Activated CD4-positive, alpha-beta T cell treated with anti-CD3 and anti-CD28 coated beads for 36 hours (primary cell): ENCODE measurements at regions of chr10 and their contacts with region 1.

Region 1: DNA sequence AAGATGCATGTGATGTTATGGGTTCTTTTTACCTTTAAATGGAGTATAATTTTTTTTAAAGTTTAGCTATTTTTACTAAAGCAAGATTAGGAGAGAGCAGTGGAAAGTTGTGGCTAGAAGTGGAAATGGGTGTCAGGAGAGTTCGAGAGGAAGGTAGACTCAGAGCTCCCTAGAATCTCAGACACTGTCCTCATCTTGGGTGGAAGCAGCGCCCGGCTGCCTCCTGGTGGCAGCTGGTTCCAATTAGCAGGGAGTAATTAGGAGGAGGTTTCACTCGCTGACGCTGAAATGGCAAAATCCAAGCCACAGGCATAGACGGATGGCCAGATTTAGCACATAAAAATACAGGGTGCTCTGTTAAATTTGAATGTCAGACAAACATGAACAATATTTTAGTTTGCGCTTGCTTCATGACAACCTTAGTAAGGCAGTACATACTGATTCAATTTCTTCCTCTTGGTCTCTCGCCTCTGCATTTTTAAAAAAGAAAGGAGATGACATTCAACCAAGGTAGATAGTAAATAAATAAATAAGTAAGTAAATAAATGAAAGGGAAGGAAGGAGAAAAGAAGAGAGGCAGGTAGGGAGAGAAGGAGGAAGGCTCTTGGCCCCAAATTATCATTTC is 58.5 kb downstream of the LGI1 start:
- DNase-seq: peak; percentile 66
- ATAC-seq: peak; percentile 72
- H3K4me3 Mint-ChIP-seq: no peak overlapping the region
- H3K27ac Mint-ChIP-seq: no peak overlapping the region
- H3K4me1 Mint-ChIP-seq: no peaks in the 10 kb centered on the region
- H3K27me3 Mint-ChIP-seq: peaks cover 34% of the 10 kb centered on the region

Region 2: GRCh38 chr10:92011560-92012214 is 1804.5 kb before region 1 on chr10:
- CTCF ChIA-PET with region 1: no interaction called
- POLR2A ChIA-PET with region 1: no interaction called
- intact Hi-C with region 1: no loop called
- DNase-seq: no peak
- ATAC-seq: peak; percentile 100
- H3K4me3 Mint-ChIP-seq: no peak overlapping the region
- H3K27ac Mint-ChIP-seq: no peak overlapping the region
- H3K4me1 Mint-ChIP-seq: peaks cover 4% of the 10 kb centered on the region
- H3K27me3 Mint-ChIP-seq: no peaks in the 10 kb centered on the region

Region 3: DNA sequence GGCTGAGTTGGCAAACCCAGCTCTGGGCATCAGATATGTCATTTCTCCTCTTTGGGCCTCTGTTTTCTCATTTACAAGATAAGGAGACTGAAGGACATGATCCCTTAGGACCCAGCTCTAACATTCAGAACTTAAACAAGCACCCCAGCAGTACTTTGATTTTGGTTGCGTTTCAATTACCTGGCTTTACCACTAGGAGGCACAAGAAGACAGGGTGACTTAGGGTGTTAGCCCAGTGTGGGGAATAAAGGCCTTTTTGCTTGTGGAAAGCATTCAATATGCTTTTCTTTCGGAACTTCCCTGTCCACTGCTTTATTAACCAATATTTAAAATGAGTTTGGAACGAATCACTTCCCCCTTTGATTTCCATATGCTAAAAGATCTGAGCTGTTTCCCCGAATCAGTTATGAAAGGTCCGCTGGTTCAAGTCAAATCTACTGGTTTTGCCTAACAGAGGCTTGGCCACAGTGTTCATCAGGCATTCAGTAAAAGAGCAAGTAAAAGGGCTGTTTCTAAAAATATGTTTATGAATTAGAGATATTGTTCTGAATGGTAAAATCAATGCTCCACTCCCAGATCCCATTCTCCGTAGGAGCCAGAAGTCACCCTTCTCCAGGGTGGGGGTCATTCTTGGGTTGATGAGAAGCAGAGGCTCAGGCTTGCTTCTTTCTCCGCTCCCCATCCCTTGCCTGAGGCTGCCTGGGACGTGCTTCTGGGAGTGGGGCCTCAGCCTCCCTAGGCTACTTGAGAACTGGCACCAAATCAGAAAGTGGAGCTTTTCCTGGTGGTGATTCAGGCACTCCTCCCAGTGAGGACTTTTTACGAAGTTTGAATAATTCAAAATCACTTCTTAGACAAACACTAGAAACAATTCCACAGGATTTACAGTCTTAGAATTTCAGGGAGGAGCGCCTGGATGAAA is 439.6 kb before region 1 on chr10:
- CTCF ChIA-PET with region 1: no interaction called
- POLR2A ChIA-PET with region 1: no interaction called
- intact Hi-C with region 1: no loop called
- DNase-seq: peak; percentile 41
- ATAC-seq: peak; percentile 20
- H3K4me3 Mint-ChIP-seq: no peak overlapping the region
- H3K27ac Mint-ChIP-seq: no peak overlapping the region
- H3K4me1 Mint-ChIP-seq: peaks cover 51% of the 10 kb centered on the region
- H3K27me3 Mint-ChIP-seq: peaks cover 5% of the 10 kb centered on the region

Region 4: DNA sequence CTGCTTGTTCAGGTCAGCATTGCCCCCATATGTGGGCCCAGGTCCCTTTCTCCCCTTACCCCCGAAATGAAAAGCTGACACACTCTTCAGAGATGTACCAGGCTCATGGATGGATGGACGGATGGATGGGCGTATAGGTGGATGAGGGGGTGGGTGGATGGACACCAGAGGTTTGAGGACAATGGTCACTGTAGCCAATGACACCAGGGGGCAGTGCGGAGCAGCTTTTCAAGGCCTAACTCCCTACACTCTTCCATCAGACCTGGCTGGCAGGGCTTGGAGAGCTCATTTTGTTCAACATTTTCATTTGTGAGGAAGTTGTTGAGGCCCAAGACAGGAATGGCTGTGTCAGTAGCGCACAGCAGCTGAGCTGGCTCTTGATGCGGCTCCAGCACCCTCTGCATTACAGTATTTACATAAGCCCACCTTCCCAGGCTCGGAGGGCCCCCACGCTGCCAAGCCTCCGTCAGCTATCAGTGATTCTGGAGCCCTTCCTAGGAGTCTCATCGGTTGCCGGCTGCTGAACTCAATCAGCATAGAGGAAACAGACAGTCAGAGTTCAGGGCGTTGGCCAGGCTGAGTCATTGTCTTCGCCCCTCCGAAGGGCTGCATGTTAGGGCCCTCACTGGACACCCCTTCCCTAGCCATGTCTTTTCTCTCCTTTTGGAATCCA is 261.3 kb before region 1 on chr10:
- CTCF ChIA-PET with region 1: interaction called, 4 read pairs
- POLR2A ChIA-PET with region 1: no interaction called
- intact Hi-C with region 1: loop called (anchors 1 to 2 kb)
- DNase-seq: peak; percentile 73
- ATAC-seq: peak; percentile 64
- H3K4me3 Mint-ChIP-seq: no peak overlapping the region
- H3K27ac Mint-ChIP-seq: no peak overlapping the region
- H3K4me1 Mint-ChIP-seq: no peaks in the 10 kb centered on the region
- H3K27me3 Mint-ChIP-seq: peaks cover 9% of the 10 kb centered on the region

Region 5: GRCh38 chr10:93702211-93703001 is 113.8 kb before region 1 on chr10 and contains the start of gene FRA10AC1:
- CTCF ChIA-PET with region 1: interaction called, 6 read pairs
- POLR2A ChIA-PET with region 1: no interaction called
- intact Hi-C with region 1: loop called (anchors 1 to 5 kb)
- DNase-seq: peak; percentile 93
- ATAC-seq: peak; percentile 84
- H3K4me3 Mint-ChIP-seq: no peak within 1 kb of the TSS
- H3K27ac Mint-ChIP-seq: no peak within 1 kb of the TSS
- H3K4me1 Mint-ChIP-seq: peaks cover 29% of the 10 kb centered on the region
- H3K27me3 Mint-ChIP-seq: no peaks in the 10 kb centered on the region
- total RNA-seq, gene FRA10AC1: 18.9 to 29.4 TPM

Region 6: GRCh38 chr10:93745408-93746065 is 70.7 kb before region 1 on chr10:
- CTCF ChIA-PET with region 1: interaction called, 9 read pairs
- POLR2A ChIA-PET with region 1: no interaction called
- intact Hi-C with region 1: loop called in 1 of 2 experiments (anchors 2 kb)
- DNase-seq: peak; percentile 21
- ATAC-seq: no peak
- H3K4me3 Mint-ChIP-seq: no peak overlapping the region
- H3K27ac Mint-ChIP-seq: no peak overlapping the region
- H3K4me1 Mint-ChIP-seq: no peaks in the 10 kb centered on the region
- H3K27me3 Mint-ChIP-seq: peaks cover 4% of the 10 kb centered on the region

Region 7: DNA sequence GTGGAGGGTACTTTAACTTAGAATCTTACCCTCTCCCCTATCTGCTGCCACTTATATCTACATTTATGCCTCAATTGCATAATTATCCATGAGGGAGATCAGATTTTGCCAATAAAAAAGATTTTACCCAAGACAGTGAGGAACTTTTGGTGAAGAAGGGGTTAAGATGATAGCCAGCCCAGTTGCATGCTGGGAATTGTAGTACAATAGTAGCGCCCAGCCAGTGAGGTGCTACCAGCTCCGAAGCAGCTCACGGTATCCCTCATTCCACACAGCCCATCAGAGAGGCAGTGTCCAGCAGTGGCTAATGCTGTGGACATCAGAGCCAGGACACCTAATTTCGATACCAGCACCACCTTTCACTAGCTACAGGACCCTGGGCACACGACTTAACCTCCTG is 64.4 kb before region 1 on chr10:
- CTCF ChIA-PET with region 1: interaction called, 3 read pairs
- POLR2A ChIA-PET with region 1: no interaction called
- intact Hi-C with region 1: loop called in 1 of 2 experiments (anchors 2 kb)
- DNase-seq: peak; percentile 13
- ATAC-seq: peak; percentile 44
- H3K4me3 Mint-ChIP-seq: no peak overlapping the region
- H3K27ac Mint-ChIP-seq: no peak overlapping the region
- H3K4me1 Mint-ChIP-seq: peaks cover 5% of the 10 kb centered on the region
- H3K27me3 Mint-ChIP-seq: peaks cover 6% of the 10 kb centered on the region

Region 8: DNA sequence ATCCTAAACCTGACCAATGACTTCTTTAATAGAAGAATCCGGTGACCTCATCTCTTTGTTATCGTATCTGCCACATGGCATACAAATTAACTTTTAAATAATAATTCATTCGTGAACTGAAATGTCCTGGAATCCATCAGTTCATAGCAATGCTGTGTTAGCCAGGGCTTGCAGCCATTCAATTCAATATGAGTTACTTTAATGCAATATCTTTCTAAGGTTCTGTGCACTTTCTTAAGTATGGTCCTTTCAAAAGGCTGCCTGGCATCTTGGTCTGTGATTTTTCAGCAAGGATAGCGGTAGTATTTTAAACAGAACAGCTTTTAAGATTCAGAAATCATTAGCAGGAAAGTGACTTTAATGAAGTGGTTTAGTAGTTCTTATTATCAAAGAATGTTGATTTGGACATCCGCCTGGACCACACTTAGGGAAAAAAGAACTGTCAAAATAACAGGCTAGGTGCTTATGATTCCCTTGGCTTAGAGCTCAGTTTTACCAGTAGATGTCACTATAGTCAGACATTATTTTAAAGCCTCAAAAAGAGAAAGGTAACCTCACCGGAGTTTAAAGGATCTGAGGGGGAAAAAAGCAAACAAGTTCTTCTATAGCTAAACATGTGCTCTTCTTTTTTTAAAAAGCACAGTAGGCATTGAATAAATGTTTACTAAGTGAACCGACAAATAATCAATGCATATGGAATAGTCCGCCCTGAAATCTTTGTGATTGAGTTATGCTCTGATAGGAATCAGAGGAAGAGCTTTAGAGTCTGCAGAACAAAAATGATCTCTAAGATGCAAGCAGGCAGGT is 100.2 kb after region 1 on chr10:
- CTCF ChIA-PET with region 1: interaction called, 3 read pairs
- POLR2A ChIA-PET with region 1: no interaction called
- intact Hi-C with region 1: loop called in 1 of 2 experiments (anchors 2 kb)
- DNase-seq: no peak
- ATAC-seq: no peak
- H3K4me3 Mint-ChIP-seq: no peak overlapping the region
- H3K27ac Mint-ChIP-seq: no peak overlapping the region
- H3K4me1 Mint-ChIP-seq: no peaks in the 10 kb centered on the region
- H3K27me3 Mint-ChIP-seq: no peaks in the 10 kb centered on the region